CD8-positive, alpha-beta T cell (primary cell): ENCODE measurements at regions of chr16 and their contacts with region 1.

Region 1: GRCh38 chr16:81696961-81697615 is 82.0 kb upstream of the PLCG2 start:
- DNase-seq: peak in 8 of 9 experiments; percentile 24 to 70 (median 48)
- ATAC-seq: peak; percentile 58
- H3K4me3 ChIP-seq: no peak overlapping the region
- H3K4me3 Mint-ChIP-seq: no peak overlapping the region
- H3K27ac ChIP-seq: no peak overlapping the region
- H3K27ac Mint-ChIP-seq: peak overlapping the region; percentile 27
- H3K4me1 ChIP-seq: no peaks in the 10 kb centered on the region
- H3K4me1 Mint-ChIP-seq: no peaks in the 10 kb centered on the region
- H3K27me3 ChIP-seq: no peaks in the 10 kb centered on the region
- H3K27me3 Mint-ChIP-seq: no peaks in the 10 kb centered on the region
- CTCF ChIP-seq: peak; percentile 35

Region 2: GRCh38 chr16:81707411-81708265 is 10.6 kb after region 1 on chr16:
- CTCF ChIA-PET with region 1: interaction called, 10 read pairs
- POLR2A ChIA-PET with region 1: no interaction called
- intact Hi-C with region 1: no loop called
- DNase-seq: no peak
- ATAC-seq: no peak
- H3K4me3 ChIP-seq: no peak overlapping the region
- H3K4me3 Mint-ChIP-seq: no peak overlapping the region
- H3K27ac ChIP-seq: no peak overlapping the region
- H3K27ac Mint-ChIP-seq: peak overlapping the region; percentile 28
- H3K4me1 ChIP-seq: no peaks in the 10 kb centered on the region
- H3K4me1 Mint-ChIP-seq: no peaks in the 10 kb centered on the region
- H3K27me3 ChIP-seq: no peaks in the 10 kb centered on the region
- H3K27me3 Mint-ChIP-seq: no peaks in the 10 kb centered on the region
- CTCF ChIP-seq: no peak